HepG2 (cell line): ENCODE measurements at regions of chr9 and their contacts with region 1.

Region 1: GRCh38 chr9:94882966-94883641 is 156.6 kb downstream of the AOPEP start:
- DNase-seq: no peak
- ATAC-seq: no peak
- H3K4me3 ChIP-seq: no peak overlapping the region
- H3K27ac ChIP-seq: no peak overlapping the region
- H3K4me1 ChIP-seq: peaks cover 27% of the 10 kb centered on the region
- H3K27me3 ChIP-seq: no peaks in the 10 kb centered on the region
- CTCF ChIP-seq: no peak
- EP300 ChIP-seq: no peak
- POLR2A ChIP-seq: no peak
- RAD21 ChIP-seq: no peak

Region 2: DNA sequence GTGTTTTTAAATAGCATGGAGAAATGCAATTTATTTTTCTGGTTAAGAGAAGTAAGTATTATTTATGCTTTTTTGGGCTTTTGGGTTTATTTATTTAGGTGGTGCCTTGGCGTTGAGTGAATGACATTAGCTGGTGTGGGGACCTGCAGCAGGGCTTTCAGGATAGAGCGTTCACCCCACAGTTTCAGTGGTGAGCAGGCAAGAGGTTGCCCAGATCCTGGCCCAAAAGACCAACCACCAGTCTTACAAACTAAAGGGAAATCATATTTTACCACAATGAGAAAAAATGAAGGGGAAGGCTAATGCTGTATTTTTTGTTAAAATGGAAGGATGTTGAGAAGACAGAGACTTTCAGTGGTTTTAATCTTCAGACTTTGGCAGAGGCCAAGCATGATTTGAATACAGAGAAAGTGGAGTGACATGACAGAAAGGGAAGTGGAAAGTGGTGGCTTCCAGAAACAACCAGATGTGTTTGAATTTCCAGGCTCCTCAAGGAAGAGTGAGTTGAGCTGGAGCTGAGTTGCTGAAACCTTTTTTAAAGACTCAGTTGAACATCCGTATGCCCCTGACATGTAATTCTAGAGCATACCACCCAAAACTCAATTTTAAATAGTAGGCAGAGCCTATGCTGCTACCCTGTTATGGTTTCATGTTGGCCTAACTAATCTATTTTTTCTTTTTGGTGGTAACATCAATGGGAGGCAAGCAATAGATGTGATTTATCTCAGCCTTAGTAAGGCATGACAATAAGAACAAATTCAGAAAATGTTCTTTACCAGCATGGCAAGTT is 61.8 kb before region 1 on chr9:
- CTCF ChIA-PET with region 1: no interaction called
- POLR2A ChIA-PET with region 1: no interaction called
- in situ Hi-C with region 1: no loop called
- intact Hi-C with region 1: loop called (anchors 10 kb)
- DNase-seq: no peak
- ATAC-seq: no peak
- H3K4me3 ChIP-seq: no peak overlapping the region
- H3K27ac ChIP-seq: no peak overlapping the region
- H3K4me1 ChIP-seq: peaks cover 36% of the 10 kb centered on the region
- H3K27me3 ChIP-seq: no peaks in the 10 kb centered on the region
- CTCF ChIP-seq: no peak
- EP300 ChIP-seq: no peak
- POLR2A ChIP-seq: no peak
- RAD21 ChIP-seq: no peak

Region 3: GRCh38 chr9:94872921-94873511 is 10.1 kb before region 1 on chr9:
- CTCF ChIA-PET with region 1: no interaction called
- POLR2A ChIA-PET with region 1: no interaction called
- in situ Hi-C with region 1: no loop called
- intact Hi-C with region 1: loop called (anchors 1 kb)
- DNase-seq: no peak
- ATAC-seq: no peak
- H3K4me3 ChIP-seq: no peak overlapping the region
- H3K27ac ChIP-seq: no peak overlapping the region
- H3K4me1 ChIP-seq: peaks cover 15% of the 10 kb centered on the region
- H3K27me3 ChIP-seq: no peaks in the 10 kb centered on the region
- CTCF ChIP-seq: no peak
- EP300 ChIP-seq: no peak
- POLR2A ChIP-seq: no peak
- RAD21 ChIP-seq: no peak